Sigmoid colon (tissue), 7 donors: ENCODE measurements at regions of chr3 and their contacts with region 1.

Region 1: GRCh38 chr3:169662132-169662842 is 1.2 kb downstream of the MECOM start:
- DNase-seq: no peak
- H3K4me3 ChIP-seq: peak overlapping the region; percentile 23 to 63 (median 55)
- H3K27ac ChIP-seq: peak overlapping the region; percentile 43 to 82 (median 59)
- H3K4me1 ChIP-seq: peaks cover 0 to 38% (median 38%) of the 10 kb centered on the region in 4 donors
- H3K27me3 ChIP-seq: peaks cover 91 to 100% (median 96%) of the 10 kb centered on the region in 3 donors
- CTCF ChIP-seq: peak in 2 of 4 experiments; percentile 34 to 65
- EP300 ChIP-seq: no peak
- POLR2A ChIP-seq: no peak

Region 2: GRCh38 chr3:169575373-169575772 is 86.9 kb before region 1 on chr3:
- intact Hi-C with region 1: no loop called
- DNase-seq: no peak
- H3K4me3 ChIP-seq: no peak overlapping the region
- H3K27ac ChIP-seq: no peak overlapping the region
- H3K4me1 ChIP-seq: peaks cover 0 to 7% (median 0%) of the 10 kb centered on the region in 4 donors
- H3K27me3 ChIP-seq: no peaks in the 10 kb centered on the region
- CTCF ChIP-seq: no peak
- EP300 ChIP-seq: no peak
- POLR2A ChIP-seq: no peak

Region 3: GRCh38 chr3:169764452-169765274 is 102.4 kb after region 1 on chr3 and contains the start of gene TERC:
- intact Hi-C with region 1: loop called (anchors 5 kb)
- DNase-seq: peak; percentile 98
- H3K4me3 ChIP-seq: peak within 1 kb of the TSS; percentile 69 to 74 (median 72)
- H3K27ac ChIP-seq: peak within 1 kb of the TSS; percentile 93 to 95 (median 94)
- H3K4me1 ChIP-seq: peaks cover 0 to 14% (median 4%) of the 10 kb centered on the region in 4 donors
- H3K27me3 ChIP-seq: no peaks in the 10 kb centered on the region
- CTCF ChIP-seq: no peak
- EP300 ChIP-seq: peak in 1 of 4 donors; percentile 11
- POLR2A ChIP-seq: peak; percentile 99
- total RNA-seq, gene TERC: 65.3 to 220 (median 125) TPM

Region 4: GRCh38 chr3:170321321-170322034 is 659.2 kb after region 1 on chr3:
- intact Hi-C with region 1: no loop called
- DNase-seq: no peak
- H3K4me3 ChIP-seq: no peak overlapping the region
- H3K27ac ChIP-seq: no peak overlapping the region
- H3K4me1 ChIP-seq: no peaks in the 10 kb centered on the region
- H3K27me3 ChIP-seq: no peaks in the 10 kb centered on the region
- CTCF ChIP-seq: no peak
- EP300 ChIP-seq: no peak
- POLR2A ChIP-seq: no peak